ENCODE measurements at regions of chr17 and their contacts with region 1.

Region 1: GRCh38 chr17:74361230-74362068 is at the start of gene BTBD17:
- DNase-seq: peak; percentile 47 to 96 (median 76)

Region 2: DNA sequence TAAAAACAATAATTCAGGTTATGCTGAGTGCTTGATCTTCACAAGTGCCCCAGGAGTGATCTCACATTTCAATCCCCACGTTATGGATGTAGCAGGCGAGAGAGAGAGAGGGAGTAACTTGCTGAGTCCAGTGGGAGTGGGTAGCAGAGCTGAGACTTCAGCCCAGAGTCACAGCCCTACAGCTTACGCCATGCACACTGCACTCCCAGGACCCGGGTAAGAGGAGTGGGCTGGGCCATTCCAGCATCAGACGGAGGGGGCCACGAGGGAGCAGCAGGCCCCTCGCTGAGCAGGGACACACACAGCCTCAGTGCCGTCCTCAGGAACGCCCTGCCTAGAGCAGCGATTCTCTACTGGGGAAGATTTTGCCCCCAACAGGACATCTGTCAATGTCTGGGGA is 45.2 kb before region 1 on chr17:
- intact Hi-C with region 1: loop called (anchors 5 kb)
- DNase-seq: no peak

Region 3: DNA sequence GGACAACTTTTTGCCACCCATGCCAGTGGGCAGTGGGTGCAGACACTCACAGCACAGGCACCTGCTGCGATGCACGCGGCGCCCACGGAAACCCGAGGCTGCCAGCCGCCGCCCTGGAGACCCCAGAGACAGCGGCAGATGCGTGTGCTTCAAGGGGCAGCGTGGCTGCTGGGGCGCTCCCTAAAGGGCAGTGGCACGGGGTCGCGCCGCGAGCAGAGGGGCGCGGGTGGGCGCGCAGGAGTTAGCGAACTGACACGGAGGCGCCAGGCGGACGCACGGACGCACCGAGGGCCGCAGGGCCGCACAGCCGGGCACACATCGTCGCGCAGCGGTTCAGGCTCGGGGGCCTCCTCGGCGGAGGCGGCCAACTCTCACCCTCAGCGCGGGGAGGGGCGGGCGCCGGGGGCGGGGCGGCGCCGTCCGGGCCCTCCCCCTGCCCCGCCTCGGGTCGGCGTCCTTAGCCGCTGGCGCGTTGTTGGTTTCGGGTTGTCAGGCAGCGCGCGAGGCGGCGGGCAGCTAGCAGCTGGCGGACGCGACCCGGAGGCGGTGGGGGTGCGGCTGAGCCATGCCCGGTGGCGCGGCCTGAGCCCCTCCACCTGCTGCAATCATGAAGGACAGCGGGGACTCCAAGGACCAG is 35.6 kb before region 1 on chr17 and contains the start of gene KIF19:
- intact Hi-C with region 1: loop called (anchors 5 kb)
- DNase-seq: peak in 7 of 10 donors; percentile 33 to 93 (median 53)

Region 4: DNA sequence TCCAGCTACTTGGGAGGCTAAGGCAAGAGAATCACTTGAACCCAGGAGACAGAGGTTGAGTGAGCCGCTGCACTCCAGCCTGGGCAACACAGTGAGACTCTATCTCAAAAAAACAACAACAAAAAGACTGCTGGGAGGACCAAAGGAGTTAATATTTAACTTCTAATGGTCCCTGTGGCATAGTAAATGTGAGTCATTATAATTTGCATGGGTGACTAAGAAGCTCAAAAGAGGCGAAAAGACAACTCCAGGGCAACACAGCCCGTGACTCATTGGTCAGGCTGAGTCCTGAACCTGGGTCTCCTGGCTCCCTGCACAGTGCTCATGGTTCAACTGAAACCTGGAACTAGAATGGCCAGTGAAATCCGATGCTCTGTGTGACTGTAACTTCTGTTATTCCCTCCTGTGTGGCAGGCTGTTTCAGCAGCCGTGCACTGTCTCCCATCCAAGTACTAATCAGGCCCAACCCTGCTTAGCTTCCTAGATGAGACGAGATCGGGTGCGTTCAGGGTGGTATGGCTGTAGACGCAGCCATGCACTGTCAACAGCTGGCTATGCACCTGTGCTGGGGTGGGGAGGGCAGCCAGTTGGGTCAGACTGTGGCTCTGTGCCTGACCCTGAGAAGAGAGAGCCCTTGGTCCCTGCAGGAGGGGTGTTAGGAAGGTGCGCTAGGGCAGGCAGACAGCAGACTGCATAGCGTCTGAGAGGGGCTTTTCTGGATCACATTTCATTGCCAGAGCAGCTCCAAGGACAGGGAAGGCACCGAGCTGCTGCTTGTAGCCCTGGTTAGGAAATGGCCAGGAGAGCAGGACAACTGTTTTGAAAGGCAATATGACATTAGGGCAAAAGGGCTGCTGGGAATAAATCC is 56.0 kb after region 1 on chr17:
- intact Hi-C with region 1: no loop called
- DNase-seq: peak in 1 of 10 donors; percentile 38

Measured in posterior cingulate gyrus (tissue), 11 donors.